ENCODE measurements at regions of chr12 and their contacts with region 1.

Region 1: DNA sequence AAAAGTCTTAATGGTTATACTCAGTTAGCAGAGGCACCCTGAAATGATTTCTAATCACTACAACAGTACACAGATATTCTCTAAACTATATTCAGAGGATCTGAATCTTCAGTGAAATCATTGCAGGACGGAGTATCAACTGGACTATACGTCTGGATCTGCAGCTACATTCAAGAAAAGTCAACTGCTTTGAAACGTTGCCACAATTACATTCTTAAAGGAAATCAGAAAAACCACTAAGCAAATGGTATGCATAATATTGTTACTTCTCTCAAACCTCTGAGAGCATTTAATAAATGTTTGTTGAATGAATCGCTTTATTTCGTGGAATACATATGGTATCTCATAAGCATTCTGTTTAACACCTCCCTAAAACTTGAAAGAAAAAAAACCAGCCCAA is 67.4 kb downstream of the MED13L start:
- DNase-seq: no peak
- ATAC-seq: no peak
- H3K4me3 ChIP-seq: no peak overlapping the region
- H3K4me3 Mint-ChIP-seq: peak overlapping the region in 5 of 10 donors; percentile 19 to 64 (median 58)
- H3K27ac ChIP-seq: no peak overlapping the region
- H3K27ac Mint-ChIP-seq: peak overlapping the region in 1 of 9 donors; percentile 14
- H3K4me1 ChIP-seq: peaks cover 4 to 22% of the 10 kb centered on the region in 2 donors
- H3K4me1 Mint-ChIP-seq: peaks cover 34 to 94% (median 86%) of the 10 kb centered on the region in 7 donors
- H3K27me3 ChIP-seq: no peaks in the 10 kb centered on the region
- H3K27me3 Mint-ChIP-seq: no peaks in the 10 kb centered on the region

Region 2: DNA sequence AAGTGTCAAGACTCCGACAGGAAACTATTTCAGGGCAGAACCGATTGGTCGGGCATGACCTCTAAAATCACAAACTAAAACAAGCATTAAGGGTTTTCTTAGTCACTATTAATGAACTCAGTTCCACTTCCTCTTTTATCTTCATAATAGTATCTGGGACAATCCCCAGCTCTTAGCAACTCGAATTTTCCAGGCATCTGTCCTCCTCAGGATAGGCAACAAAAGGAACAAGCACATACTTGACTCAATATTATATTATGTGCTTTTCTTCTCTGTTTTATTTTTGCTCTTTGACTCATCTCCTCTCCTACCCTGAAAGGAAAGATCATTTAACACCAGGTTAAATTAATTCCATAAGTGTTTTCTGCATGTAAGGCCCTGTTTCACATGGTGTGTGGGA is 887.9 kb before region 1 on chr12:
- CTCF ChIA-PET with region 1: no interaction called
- POLR2A ChIA-PET with region 1: no interaction called
- intact Hi-C with region 1: no loop called
- DNase-seq: no peak
- ATAC-seq: no peak
- H3K4me3 ChIP-seq: no peak overlapping the region
- H3K4me3 Mint-ChIP-seq: no peak overlapping the region
- H3K27ac ChIP-seq: no peak overlapping the region
- H3K27ac Mint-ChIP-seq: no peak overlapping the region
- H3K4me1 ChIP-seq: no peaks in the 10 kb centered on the region
- H3K4me1 Mint-ChIP-seq: no peaks in the 10 kb centered on the region
- H3K27me3 ChIP-seq: no peaks in the 10 kb centered on the region
- H3K27me3 Mint-ChIP-seq: no peaks in the 10 kb centered on the region

Region 3: GRCh38 chr12:116222358-116222757 is 12.2 kb after region 1 on chr12:
- CTCF ChIA-PET with region 1: no interaction called
- POLR2A ChIA-PET with region 1: no interaction called
- intact Hi-C with region 1: loop called in 1 of 2 experiments (anchors 1 kb)
- DNase-seq: no peak
- ATAC-seq: no peak
- H3K4me3 ChIP-seq: no peak overlapping the region
- H3K4me3 Mint-ChIP-seq: no peak overlapping the region
- H3K27ac ChIP-seq: no peak overlapping the region
- H3K27ac Mint-ChIP-seq: no peak overlapping the region
- H3K4me1 ChIP-seq: peaks cover 0 to 4% of the 10 kb centered on the region in 2 donors
- H3K4me1 Mint-ChIP-seq: peaks cover 17 to 52% (median 41%) of the 10 kb centered on the region in 7 donors
- H3K27me3 ChIP-seq: no peaks in the 10 kb centered on the region
- H3K27me3 Mint-ChIP-seq: no peaks in the 10 kb centered on the region